ENCODE measurements at regions of chr1 and their contacts with region 1.

Region 1: DNA sequence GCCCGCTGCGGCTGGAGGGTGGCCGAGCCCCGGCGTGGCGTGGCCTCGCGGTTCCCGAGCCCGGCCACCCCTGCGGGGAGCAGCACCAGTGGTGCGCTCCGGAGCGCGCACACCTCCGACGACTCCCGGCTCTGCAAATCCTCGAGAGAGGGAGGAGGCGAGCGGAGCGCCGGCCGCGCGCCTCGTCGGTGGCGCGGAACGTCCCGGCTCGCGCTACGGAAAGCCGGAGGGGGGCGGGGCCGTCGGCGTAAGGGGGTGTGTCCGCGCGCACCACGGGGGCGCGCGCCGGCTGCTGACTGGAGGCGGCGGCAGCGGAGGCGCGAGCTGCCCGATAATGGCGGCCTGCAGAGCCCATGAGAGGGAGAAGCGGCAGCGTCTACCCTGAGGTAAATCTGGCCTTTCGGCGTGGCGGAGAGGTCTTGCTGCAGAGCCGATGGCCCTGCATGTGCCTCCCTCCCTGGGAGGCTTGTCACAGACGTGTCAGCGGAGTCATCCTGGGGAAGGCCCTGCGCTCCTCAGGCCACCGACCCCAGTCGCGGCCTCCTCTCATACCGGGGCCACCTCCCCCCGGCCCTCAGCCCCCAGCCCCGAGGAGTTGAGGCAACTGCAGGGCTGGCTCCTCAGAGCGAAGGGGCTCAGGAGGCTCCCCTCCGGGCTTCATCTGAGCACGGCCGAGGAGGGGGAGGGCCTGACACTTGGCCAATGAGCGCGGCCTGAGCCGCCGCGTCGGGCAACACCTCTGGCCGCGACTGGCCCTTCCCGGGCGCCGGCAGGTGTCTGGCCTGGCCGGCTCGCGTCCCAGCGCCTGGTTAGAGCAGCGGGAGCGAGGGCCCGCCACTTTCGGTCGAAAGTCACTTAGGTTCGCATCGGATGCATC is at the start of gene PDIK1L:
- DNase-seq: peak; percentile 86 to 95
- H3K4me3 ChIP-seq: peak within 1 kb of the TSS; percentile 75 to 93
- H3K27ac ChIP-seq: peak within 1 kb of the TSS; percentile 91 to 92
- H3K4me1 ChIP-seq: peaks cover 0 to 24% (median 14%) of the 10 kb centered on the region in 4 donors
- H3K27me3 ChIP-seq: no peaks in the 10 kb centered on the region
- CTCF ChIP-seq: peak in 1 of 2 experiments; percentile 1

Region 2: DNA sequence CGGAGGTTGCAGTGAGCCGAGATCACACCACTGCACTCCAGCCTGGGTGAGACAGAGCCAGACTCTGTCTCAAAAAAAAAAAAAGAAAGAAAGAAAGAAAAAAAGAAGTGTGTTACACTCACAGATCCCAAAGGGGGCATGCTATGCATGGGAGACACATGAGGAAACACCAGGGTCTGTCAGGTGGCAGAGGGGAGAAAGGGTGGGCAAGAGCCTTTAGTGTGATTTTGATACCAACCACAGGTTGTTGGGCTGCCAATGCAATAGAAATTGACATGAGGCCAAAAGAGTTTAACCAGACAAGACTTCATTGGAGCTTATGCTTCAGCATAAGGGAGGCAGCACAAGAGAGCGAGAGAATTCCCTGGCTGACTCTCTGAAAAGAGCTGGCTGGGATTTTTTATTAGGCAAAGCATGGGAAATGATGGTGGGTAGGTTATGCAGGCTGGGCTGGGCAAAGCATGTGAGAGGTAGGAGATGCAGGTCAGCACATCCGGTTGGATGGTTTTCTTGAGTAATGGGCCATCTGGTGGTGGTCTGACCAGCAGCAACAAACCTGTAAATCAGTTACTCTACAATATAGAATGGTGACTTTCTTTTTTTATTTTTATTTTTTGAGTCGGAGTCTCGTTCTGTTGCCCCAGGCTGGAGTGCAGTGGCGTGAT is 101.8 kb before region 1 on chr1:
- intact Hi-C with region 1: no loop called
- DNase-seq: no peak
- H3K4me3 ChIP-seq: no peak overlapping the region
- H3K27ac ChIP-seq: no peak overlapping the region
- H3K4me1 ChIP-seq: peaks cover 0 to 11% (median 1%) of the 10 kb centered on the region in 4 donors
- H3K27me3 ChIP-seq: peaks cover 0 to 18% of the 10 kb centered on the region in 2 donors
- CTCF ChIP-seq: no peak

Region 3: DNA sequence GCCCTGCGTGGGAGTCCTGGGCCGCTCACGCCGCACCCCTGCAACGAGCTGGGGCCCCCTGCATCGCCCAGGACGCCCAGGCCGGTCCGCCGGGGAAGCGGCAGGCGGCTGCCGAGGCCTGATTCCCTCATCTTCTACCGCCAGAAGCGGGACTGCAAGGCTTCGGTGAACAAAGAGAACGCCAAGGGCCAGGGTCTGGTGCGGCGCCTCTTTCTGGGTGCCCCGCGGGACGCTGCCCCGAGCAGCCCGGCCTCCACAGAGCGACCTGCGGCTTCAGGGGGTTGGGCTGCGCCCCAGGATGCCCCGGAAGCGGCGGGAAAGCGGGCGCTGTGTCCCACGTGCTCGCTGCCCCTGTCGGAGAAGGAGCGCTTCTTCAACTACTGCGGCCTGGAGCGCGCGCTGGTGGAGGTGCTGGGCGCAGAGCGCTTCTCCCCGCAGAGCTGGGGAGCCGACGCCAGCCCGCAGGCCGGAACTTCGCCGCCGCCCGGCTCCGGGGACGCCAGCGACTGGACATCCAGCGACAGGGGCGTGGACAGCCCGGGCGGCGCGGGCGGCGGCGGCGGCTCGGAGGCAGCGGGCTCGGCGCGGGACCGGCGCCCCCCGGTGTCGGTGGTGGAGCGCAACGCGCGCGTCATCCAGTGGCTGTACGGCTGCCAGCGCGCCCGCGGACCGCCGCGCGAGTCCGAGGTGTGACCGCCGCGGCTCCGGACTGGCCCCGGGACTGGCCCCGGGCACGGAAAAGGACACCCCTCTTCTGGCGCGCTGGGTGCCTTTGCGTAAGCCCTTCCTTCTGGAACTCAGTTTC is 49.8 kb after region 1 on chr1:
- intact Hi-C with region 1: loop called (anchors 5 kb)
- DNase-seq: peak; percentile 30 to 77
- H3K4me3 ChIP-seq: peak overlapping the region; percentile 52 to 63
- H3K27ac ChIP-seq: peak overlapping the region in 1 of 2 donors; percentile 51
- H3K4me1 ChIP-seq: peaks cover 0 to 28% (median 20%) of the 10 kb centered on the region in 4 donors
- H3K27me3 ChIP-seq: peaks cover 0 to 35% of the 10 kb centered on the region in 2 donors
- CTCF ChIP-seq: peak in 1 of 2 experiments; percentile 14